Posterior vena cava (tissue), 2 donors: ENCODE measurements at regions of chr4 and their contacts with region 1.

Region 1: GRCh38 chr4:98995183-98996055 is at the start of gene METAP1:
- DNase-seq: peak; percentile 97
- total RNA-seq, gene METAP1: 43.3 to 46.1 TPM

Region 2: DNA sequence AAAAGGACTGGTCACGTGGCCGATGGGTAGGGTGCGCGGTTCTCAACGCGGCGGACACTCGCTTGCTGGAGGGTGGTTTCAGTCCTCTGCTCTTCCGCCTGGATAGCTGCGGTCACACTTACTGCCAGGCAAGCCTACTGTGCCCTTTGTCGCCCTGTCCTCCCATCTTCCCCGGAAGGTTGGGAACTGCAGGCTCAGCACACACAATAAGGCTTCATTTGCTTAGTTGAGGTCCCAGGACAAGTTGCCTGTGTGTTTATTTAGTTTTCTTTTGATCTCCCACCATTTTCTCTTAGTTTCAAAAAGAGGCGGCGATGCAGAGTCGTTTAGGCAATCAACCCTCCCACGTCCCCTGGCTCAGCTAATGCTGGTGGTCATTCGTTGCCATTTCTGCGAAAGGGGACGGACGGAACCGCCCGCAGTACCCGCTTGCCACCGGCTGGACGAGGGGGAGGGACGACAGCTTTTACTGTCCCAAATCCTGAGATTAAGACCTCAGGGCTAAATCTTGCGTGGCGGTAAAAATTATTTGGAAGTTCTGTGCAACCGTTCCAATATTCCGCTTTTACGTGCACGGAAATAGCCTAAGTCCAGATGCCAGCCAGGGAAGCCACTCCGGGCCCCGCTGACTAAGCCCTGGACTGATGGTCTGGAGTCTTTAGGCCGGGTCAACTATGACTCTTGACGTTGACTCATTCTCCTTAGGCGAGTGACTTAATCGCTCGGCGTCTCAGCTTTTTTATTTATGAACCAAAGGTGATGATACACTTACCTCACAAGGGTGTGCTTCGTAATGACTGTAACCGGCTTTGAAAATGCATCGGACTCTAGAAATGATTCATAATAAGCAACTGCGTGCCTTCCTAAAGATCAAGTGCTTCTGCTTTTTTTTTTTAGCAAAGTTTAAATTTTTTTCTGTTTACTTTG is 65.8 kb before region 1 on chr4:
- intact Hi-C with region 1: loop called in 1 of 2 experiments (anchors 10 kb)
- DNase-seq: peak; percentile 92